CD8-positive, alpha-beta T cell (primary cell): ENCODE measurements at regions of chr10 and their contacts with region 1.

Region 1: DNA sequence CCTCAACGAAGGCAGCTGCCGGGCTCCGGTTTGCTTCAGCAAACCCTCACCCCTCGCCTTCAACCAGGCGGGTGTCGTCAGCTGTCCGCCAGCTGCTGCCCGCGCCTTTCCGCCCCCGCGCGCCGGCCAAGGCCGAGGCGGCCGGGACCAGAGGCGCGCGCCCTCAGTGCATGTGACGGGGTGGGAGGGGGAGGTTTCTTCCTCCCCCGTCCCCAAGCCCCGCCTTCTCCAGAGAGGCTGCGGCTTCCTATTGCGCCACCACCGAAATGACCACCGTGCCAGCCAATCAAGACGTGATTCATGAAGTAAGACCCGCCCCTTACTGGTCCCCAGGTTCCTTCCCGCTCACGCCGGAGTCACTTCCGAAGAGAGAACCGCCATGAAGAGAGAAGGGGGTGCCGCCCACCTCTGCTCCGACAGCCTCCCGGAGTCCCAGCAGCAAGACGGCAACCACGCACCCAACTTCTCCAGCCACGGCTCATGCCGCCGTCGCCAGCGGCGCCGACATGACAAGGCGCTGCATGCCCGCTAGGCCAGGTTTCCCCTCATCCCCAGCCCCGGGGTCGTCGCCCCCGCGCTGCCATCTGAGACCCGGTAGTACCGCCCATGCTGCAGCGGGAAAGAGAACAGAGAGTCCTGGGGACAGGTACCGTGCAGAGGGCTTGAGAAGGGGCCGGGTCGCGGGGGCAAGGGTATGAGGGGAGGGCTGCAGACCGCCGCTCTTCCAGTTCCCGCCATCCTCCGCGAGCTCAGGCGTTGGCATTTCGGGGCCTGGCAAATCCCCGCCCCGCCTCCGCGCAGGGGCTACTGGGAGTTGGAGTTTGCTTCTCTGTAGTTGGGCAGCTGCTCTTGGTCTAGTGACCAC is at the start of gene SLF2:
- DNase-seq: peak; percentile 75 to 96 (median 89)
- ATAC-seq: peak; percentile 84
- H3K4me3 ChIP-seq: peak within 1 kb of the TSS; percentile 98 to 100
- H3K4me3 Mint-ChIP-seq: peak within 1 kb of the TSS; percentile 99
- H3K27ac ChIP-seq: peak within 1 kb of the TSS; percentile 67 to 79
- H3K27ac Mint-ChIP-seq: peak within 1 kb of the TSS; percentile 98
- H3K4me1 ChIP-seq: peaks cover 21% of the 10 kb centered on the region
- H3K4me1 Mint-ChIP-seq: peaks cover 48% of the 10 kb centered on the region
- H3K27me3 ChIP-seq: no peaks in the 10 kb centered on the region
- H3K27me3 Mint-ChIP-seq: no peaks in the 10 kb centered on the region
- CTCF ChIP-seq: no peak
- total RNA-seq, gene SLF2: 8.0 to 8.3 TPM

Region 2: GRCh38 chr10:100535715-100536353 is 377.0 kb before region 1 on chr10 and contains the start of gene HIF1AN:
- CTCF ChIA-PET with region 1: no interaction called
- POLR2A ChIA-PET with region 1: interaction called, 3 read pairs
- intact Hi-C with region 1: loop called in 1 of 2 experiments (anchors 5 kb)
- DNase-seq: peak; percentile 73 to 97 (median 88)
- ATAC-seq: peak; percentile 99
- H3K4me3 ChIP-seq: peak within 1 kb of the TSS; percentile 59 to 82
- H3K4me3 Mint-ChIP-seq: no peak within 1 kb of the TSS
- H3K27ac ChIP-seq: peak within 1 kb of the TSS; percentile 55 to 75
- H3K27ac Mint-ChIP-seq: no peak within 1 kb of the TSS
- H3K4me1 ChIP-seq: peaks cover 29% of the 10 kb centered on the region
- H3K4me1 Mint-ChIP-seq: peaks cover 19% of the 10 kb centered on the region
- H3K27me3 ChIP-seq: no peaks in the 10 kb centered on the region
- H3K27me3 Mint-ChIP-seq: no peaks in the 10 kb centered on the region
- CTCF ChIP-seq: peak; percentile 92
- total RNA-seq, gene HIF1AN: 28.0 to 31.2 TPM

Region 3: DNA sequence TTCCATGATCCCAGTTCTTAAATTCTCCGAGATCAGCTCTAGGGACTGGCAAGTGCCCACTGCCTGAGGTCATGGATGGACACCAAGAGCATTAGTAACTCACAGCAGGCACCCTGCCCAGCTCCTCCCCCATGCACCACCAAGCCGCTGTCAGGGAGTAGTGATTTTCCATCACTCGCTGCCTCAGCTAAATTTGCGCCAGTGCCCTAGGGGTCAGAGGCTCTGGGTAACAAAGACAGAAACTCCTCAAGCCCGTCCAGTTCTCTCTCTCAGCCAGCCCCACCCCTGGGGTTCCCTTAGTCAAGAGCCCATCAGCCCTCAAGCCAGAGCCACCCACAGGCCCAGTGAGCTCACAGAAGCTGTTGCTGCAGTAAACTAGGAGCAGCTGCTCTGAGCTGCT is 137.5 kb before region 1 on chr10:
- CTCF ChIA-PET with region 1: no interaction called
- POLR2A ChIA-PET with region 1: no interaction called
- intact Hi-C with region 1: no loop called
- DNase-seq: no peak
- ATAC-seq: no peak
- H3K4me3 ChIP-seq: no peak overlapping the region
- H3K4me3 Mint-ChIP-seq: no peak overlapping the region
- H3K27ac ChIP-seq: no peak overlapping the region
- H3K27ac Mint-ChIP-seq: no peak overlapping the region
- H3K4me1 ChIP-seq: no peaks in the 10 kb centered on the region
- H3K4me1 Mint-ChIP-seq: no peaks in the 10 kb centered on the region
- H3K27me3 ChIP-seq: no peaks in the 10 kb centered on the region
- H3K27me3 Mint-ChIP-seq: peaks cover 44% of the 10 kb centered on the region
- CTCF ChIP-seq: no peak

Region 4: GRCh38 chr10:100986952-100987750 is 74.3 kb after region 1 on chr10 and contains the starts of genes MRPL43 and TWNK:
- CTCF ChIA-PET with region 1: no interaction called
- POLR2A ChIA-PET with region 1: no interaction called
- intact Hi-C with region 1: loop called (anchors 1 to 2 kb)
- DNase-seq: peak; percentile 68 to 90 (median 87)
- ATAC-seq: peak; percentile 95
- H3K4me3 ChIP-seq: peak within 1 kb of the TSS; percentile 79 to 93
- H3K4me3 Mint-ChIP-seq: peak within 1 kb of the TSS; percentile 99
- H3K27ac ChIP-seq: peak within 1 kb of the TSS; percentile 51 to 64
- H3K27ac Mint-ChIP-seq: peak within 1 kb of the TSS; percentile 95
- H3K4me1 ChIP-seq: peaks cover 35% of the 10 kb centered on the region
- H3K4me1 Mint-ChIP-seq: peaks cover 46% of the 10 kb centered on the region
- H3K27me3 ChIP-seq: no peaks in the 10 kb centered on the region
- H3K27me3 Mint-ChIP-seq: no peaks in the 10 kb centered on the region
- CTCF ChIP-seq: no peak
- total RNA-seq, gene MRPL43: 28.3 to 28.4 TPM
- total RNA-seq, gene TWNK: 4.6 to 4.7 TPM

Region 5: DNA sequence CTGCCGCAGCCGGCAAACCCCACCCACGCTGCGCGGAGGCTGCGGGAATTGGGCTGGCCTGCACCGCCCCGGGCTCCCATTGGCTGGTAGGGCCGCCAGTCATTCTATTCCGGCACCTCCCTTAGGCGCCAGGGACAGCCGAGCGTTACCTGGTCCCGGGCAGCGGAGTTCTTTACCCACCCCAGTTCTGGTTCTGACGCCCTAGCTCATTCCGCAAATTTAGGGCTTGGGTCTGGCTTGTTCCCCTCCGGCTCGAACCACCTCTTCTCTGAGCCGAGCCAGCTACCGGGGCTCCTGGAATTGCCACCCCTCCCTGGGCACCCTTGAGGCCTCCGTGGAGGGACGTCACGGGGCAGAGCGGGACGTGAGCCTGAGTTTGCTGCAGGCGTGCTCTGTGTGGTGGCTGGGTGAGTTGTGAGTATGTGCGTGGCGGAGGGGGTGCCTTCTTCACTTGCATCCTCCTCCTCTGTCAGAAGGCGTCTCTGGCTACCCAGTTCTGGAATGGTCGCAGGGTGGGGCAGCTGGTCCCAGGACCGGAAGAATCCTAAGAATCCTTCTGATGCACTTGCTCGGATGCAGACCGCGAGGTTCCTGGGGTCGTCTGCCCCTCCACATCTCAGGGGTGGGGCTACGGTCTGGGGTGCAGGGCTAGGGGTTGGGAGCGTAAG is 118.4 kb after region 1 on chr10 and contains the starts of genes PDZD7 and SFXN3:
- CTCF ChIA-PET with region 1: no interaction called
- POLR2A ChIA-PET with region 1: interaction called, 3 read pairs
- intact Hi-C with region 1: loop called in 1 of 2 experiments (anchors 1 kb)
- DNase-seq: peak; percentile 91 to 98 (median 96)
- ATAC-seq: peak; percentile 76
- H3K4me3 ChIP-seq: peak within 1 kb of the TSS; percentile 86 to 91
- H3K4me3 Mint-ChIP-seq: peak within 1 kb of the TSS; percentile 91
- H3K27ac ChIP-seq: peak within 1 kb of the TSS; percentile 87 to 98
- H3K27ac Mint-ChIP-seq: peak within 1 kb of the TSS; percentile 91
- H3K4me1 ChIP-seq: peaks cover 14% of the 10 kb centered on the region
- H3K4me1 Mint-ChIP-seq: peaks cover 23% of the 10 kb centered on the region
- H3K27me3 ChIP-seq: no peaks in the 10 kb centered on the region
- H3K27me3 Mint-ChIP-seq: no peaks in the 10 kb centered on the region
- CTCF ChIP-seq: no peak
- total RNA-seq, gene PDZD7: 0.95 to 1.7 TPM
- total RNA-seq, gene SFXN3: 38.1 to 39.3 TPM